Panc1 (cell line): ENCODE measurements at regions of chr6 and their contacts with region 1.

Region 1: DNA sequence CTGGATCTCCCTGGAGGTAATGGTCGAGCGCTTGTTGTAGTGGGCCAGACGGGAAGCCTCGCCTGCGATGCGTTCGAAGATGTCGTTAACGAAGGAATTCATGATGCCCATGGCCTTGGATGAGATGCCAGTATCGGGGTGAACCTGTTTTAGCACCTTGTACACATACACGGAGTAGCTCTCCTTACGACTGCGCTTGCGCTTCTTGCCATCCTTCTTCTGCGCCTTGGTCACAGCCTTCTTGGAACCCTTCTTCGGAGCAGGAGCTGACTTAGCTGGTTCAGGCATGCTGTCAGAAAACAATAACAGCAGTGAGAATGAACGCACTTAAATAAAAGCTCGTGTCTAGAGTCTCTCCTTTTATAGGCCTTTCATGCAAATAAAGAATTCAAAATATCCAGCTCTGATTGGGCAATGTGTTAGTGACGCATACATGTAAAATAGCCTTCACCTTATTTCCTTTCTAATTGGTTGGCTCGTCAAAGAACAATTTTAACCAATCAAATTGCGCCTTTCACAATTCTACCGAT is 129.2 kb downstream of the HFE start:
- DNase-seq: peak; percentile 99
- ATAC-seq: peak; percentile 79
- H3K4me3 ChIP-seq: peak overlapping the region; percentile 75 to 78
- H3K27ac ChIP-seq: peak overlapping the region; percentile 98
- H3K4me1 ChIP-seq: peaks cover 21% of the 10 kb centered on the region
- H3K27me3 ChIP-seq: no peaks in the 10 kb centered on the region
- CTCF ChIP-seq: no peak

Region 2: GRCh38 chr6:26172496-26172958 is 43.9 kb before region 1 on chr6:
- CTCF ChIA-PET with region 1: no interaction called
- POLR2A ChIA-PET with region 1: interaction called, 11 read pairs
- in situ Hi-C with region 1: no loop called
- intact Hi-C with region 1: no loop called
- DNase-seq: no peak
- ATAC-seq: peak; percentile 46
- H3K4me3 ChIP-seq: peak overlapping the region; percentile 74 to 87
- H3K27ac ChIP-seq: peak overlapping the region; percentile 99
- H3K4me1 ChIP-seq: peaks cover 33% of the 10 kb centered on the region
- H3K27me3 ChIP-seq: no peaks in the 10 kb centered on the region
- CTCF ChIP-seq: no peak

Region 3: GRCh38 chr6:26204332-26205165 is 11.9 kb before region 1 on chr6:
- CTCF ChIA-PET with region 1: no interaction called
- POLR2A ChIA-PET with region 1: interaction called, 46 read pairs
- in situ Hi-C with region 1: no loop called
- intact Hi-C with region 1: no loop called
- DNase-seq: peak; percentile 98
- ATAC-seq: peak; percentile 84
- H3K4me3 ChIP-seq: peak overlapping the region; percentile 65 to 83
- H3K27ac ChIP-seq: peak overlapping the region; percentile 93
- H3K4me1 ChIP-seq: peaks cover 22% of the 10 kb centered on the region
- H3K27me3 ChIP-seq: no peaks in the 10 kb centered on the region
- CTCF ChIP-seq: peak; percentile 30

Region 4: GRCh38 chr6:26270903-26271667 is 54.7 kb after region 1 on chr6:
- CTCF ChIA-PET with region 1: interaction called, 3 read pairs
- POLR2A ChIA-PET with region 1: interaction called, 40 read pairs
- in situ Hi-C with region 1: no loop called
- intact Hi-C with region 1: loop called (anchors 5 kb)
- DNase-seq: no peak
- ATAC-seq: no peak
- H3K4me3 ChIP-seq: peak overlapping the region in 1 of 2 experiments; percentile 61; a peak in 1 of 4 replicates
- H3K27ac ChIP-seq: peak overlapping the region; percentile 89
- H3K4me1 ChIP-seq: peaks cover 7% of the 10 kb centered on the region
- H3K27me3 ChIP-seq: no peaks in the 10 kb centered on the region
- CTCF ChIP-seq: no peak

Region 5: DNA sequence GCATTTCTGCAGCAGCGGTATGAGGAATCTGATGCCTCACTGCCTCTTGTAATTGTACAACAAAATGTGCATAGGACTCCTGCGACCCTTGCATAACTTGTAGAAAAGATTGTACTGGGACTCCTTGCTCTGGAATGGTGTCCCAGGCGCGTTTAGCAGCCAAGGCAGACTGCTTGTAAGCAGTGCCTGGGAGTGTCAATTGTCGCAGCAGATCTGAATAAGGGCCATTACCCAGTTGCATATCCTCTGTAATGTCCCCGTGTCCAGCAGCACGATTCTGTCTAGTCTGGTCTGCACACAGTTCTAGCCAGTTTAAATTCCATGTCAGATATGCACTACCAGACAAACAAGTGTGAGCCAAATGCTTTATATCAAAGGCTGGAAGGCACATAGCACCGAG is 77.9 kb after region 1 on chr6:
- CTCF ChIA-PET with region 1: no interaction called
- POLR2A ChIA-PET with region 1: interaction called, 10 read pairs
- in situ Hi-C with region 1: no loop called
- intact Hi-C with region 1: no loop called
- DNase-seq: no peak
- ATAC-seq: no peak
- H3K4me3 ChIP-seq: no peak overlapping the region
- H3K27ac ChIP-seq: no peak overlapping the region
- H3K4me1 ChIP-seq: peaks cover 5% of the 10 kb centered on the region; the same call in 1 of the 2 replicates
- H3K27me3 ChIP-seq: no peaks in the 10 kb centered on the region
- CTCF ChIP-seq: no peak